PC-9 (cell line): ENCODE measurements at regions of chr3 and their contacts with region 1.

Region 1: GRCh38 chr3:139427283-139427993 is 38.0 kb upstream of the COPB2 start:
- DNase-seq: peak; percentile 12 to 66
- H3K4me3 ChIP-seq: no peak overlapping the region
- H3K27ac ChIP-seq: no peak overlapping the region
- H3K4me1 ChIP-seq: no peaks in the 10 kb centered on the region
- H3K27me3 ChIP-seq: no peaks in the 10 kb centered on the region
- CTCF ChIP-seq: peak; percentile 91

Region 2: GRCh38 chr3:139389458-139390209 is 37.8 kb before region 1 on chr3 and contains the start of gene COPB2:
- CTCF ChIA-PET with region 1: no interaction called
- POLR2A ChIA-PET with region 1: no interaction called
- intact Hi-C with region 1: loop called (anchors 5 kb)
- DNase-seq: peak; percentile 96 to 100
- H3K4me3 ChIP-seq: peak within 1 kb of the TSS; percentile 78
- H3K27ac ChIP-seq: peak within 1 kb of the TSS; percentile 88
- H3K4me1 ChIP-seq: peaks cover 20% of the 10 kb centered on the region
- H3K27me3 ChIP-seq: no peaks in the 10 kb centered on the region
- CTCF ChIP-seq: no peak
- total RNA-seq, gene COPB2: 147 and 156 TPM in 2 replicates

Region 3: GRCh38 chr3:139935016-139935865 is 507.8 kb after region 1 on chr3 and contains the start of gene CLSTN2:
- CTCF ChIA-PET with region 1: interaction called, 3 read pairs
- POLR2A ChIA-PET with region 1: no interaction called
- intact Hi-C with region 1: loop called (anchors 5 kb)
- DNase-seq: no peak
- H3K4me3 ChIP-seq: no peak within 1 kb of the TSS
- H3K27ac ChIP-seq: no peak within 1 kb of the TSS
- H3K4me1 ChIP-seq: no peaks in the 10 kb centered on the region
- H3K27me3 ChIP-seq: no peaks in the 10 kb centered on the region
- CTCF ChIP-seq: no peak
- total RNA-seq, gene CLSTN2: not detected in 2 replicates